Mammary epithelial cell (primary cell): ENCODE measurements at regions of chr17 and their contacts with region 1.

Region 1: DNA sequence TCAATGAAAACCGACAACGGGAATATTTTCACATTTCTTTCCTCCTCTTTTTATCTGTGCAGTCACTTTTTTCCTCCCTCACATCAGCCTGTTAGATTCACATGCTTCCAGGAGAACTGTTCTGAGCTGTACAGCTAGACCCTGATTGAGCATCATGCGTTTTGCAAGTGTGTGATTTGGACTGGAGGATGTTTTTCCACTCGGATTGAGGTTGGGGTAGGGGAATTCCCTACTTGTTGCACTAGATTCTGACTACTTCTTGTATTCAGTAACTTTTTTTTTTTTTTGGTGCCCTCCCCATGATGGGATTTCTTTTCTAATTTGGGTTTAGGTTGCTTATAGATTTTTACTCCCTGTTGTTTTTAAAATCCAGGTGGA is 4.8 kb downstream of the MSI2 start:
- DNase-seq: no peak
- H3K4me3 ChIP-seq: no peak overlapping the region
- H3K27ac ChIP-seq: no peak overlapping the region
- H3K4me1 ChIP-seq: peaks cover 28% of the 10 kb centered on the region
- H3K27me3 ChIP-seq: no peaks in the 10 kb centered on the region
- CTCF ChIP-seq: no peak

Region 2: GRCh38 chr17:56866496-56866895 is 394.6 kb before region 1 on chr17:
- CTCF ChIA-PET with region 1: no interaction called
- dilution Hi-C with region 1: no loop called
- in situ Hi-C with region 1: no loop called
- intact Hi-C with region 1: no loop called
- DNase-seq: no peak
- H3K4me3 ChIP-seq: no peak overlapping the region
- H3K27ac ChIP-seq: no peak overlapping the region
- H3K4me1 ChIP-seq: no peaks in the 10 kb centered on the region
- H3K27me3 ChIP-seq: no peaks in the 10 kb centered on the region
- CTCF ChIP-seq: no peak

Region 3: GRCh38 chr17:57201481-57201880 is 59.6 kb before region 1 on chr17:
- CTCF ChIA-PET with region 1: no interaction called
- dilution Hi-C with region 1: loop called (anchors 10 kb)
- in situ Hi-C with region 1: no loop called
- intact Hi-C with region 1: no loop called
- DNase-seq: no peak
- H3K4me3 ChIP-seq: no peak overlapping the region
- H3K27ac ChIP-seq: no peak overlapping the region
- H3K4me1 ChIP-seq: no peaks in the 10 kb centered on the region
- H3K27me3 ChIP-seq: no peaks in the 10 kb centered on the region
- CTCF ChIP-seq: no peak

Region 4: GRCh38 chr17:57284984-57285646 is 24.0 kb after region 1 on chr17:
- CTCF ChIA-PET with region 1: no interaction called
- dilution Hi-C with region 1: no loop called
- in situ Hi-C with region 1: no loop called
- intact Hi-C with region 1: no loop called
- DNase-seq: no peak
- H3K4me3 ChIP-seq: no peak overlapping the region
- H3K27ac ChIP-seq: no peak overlapping the region
- H3K4me1 ChIP-seq: peaks cover 4% of the 10 kb centered on the region
- H3K27me3 ChIP-seq: no peaks in the 10 kb centered on the region
- CTCF ChIP-seq: no peak

Region 5: DNA sequence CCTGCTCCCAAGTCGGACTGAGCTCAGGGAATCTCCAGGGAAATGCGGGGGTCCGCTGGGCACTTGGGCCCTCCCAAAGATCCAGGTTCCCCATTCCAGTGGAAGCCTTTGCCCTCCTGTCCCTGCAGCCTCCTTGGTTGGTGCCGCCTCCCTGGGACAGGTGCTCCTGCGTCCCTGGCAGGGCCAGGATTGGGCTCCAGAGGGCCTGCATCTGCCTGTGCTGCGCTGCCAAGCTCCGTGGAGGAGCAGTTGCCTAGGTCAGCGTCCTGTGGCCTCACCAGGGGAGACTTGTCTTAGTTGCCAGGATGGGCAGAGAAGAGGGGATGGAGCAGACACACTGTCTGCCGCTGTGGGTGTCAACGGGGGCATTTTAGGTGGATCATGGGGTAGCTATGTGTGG is 62.3 kb after region 1 on chr17:
- CTCF ChIA-PET with region 1: no interaction called
- dilution Hi-C with region 1: loop called (anchors 5 kb)
- in situ Hi-C with region 1: no loop called
- intact Hi-C with region 1: no loop called
- DNase-seq: no peak
- H3K4me3 ChIP-seq: no peak overlapping the region
- H3K27ac ChIP-seq: no peak overlapping the region
- H3K4me1 ChIP-seq: no peaks in the 10 kb centered on the region
- H3K27me3 ChIP-seq: no peaks in the 10 kb centered on the region
- CTCF ChIP-seq: no peak

Region 6: GRCh38 chr17:57370037-57370581 is 109.0 kb after region 1 on chr17:
- CTCF ChIA-PET with region 1: no interaction called
- dilution Hi-C with region 1: loop called (anchors 5 kb)
- in situ Hi-C with region 1: no loop called
- intact Hi-C with region 1: loop called (anchors 5 kb)
- DNase-seq: peak; percentile 94
- H3K4me3 ChIP-seq: no peak overlapping the region
- H3K27ac ChIP-seq: peak overlapping the region; percentile 88
- H3K4me1 ChIP-seq: peaks cover 45% of the 10 kb centered on the region
- H3K27me3 ChIP-seq: no peaks in the 10 kb centered on the region
- CTCF ChIP-seq: no peak